ENCODE measurements at regions of chr3 and their contacts with region 1.

Region 1: DNA sequence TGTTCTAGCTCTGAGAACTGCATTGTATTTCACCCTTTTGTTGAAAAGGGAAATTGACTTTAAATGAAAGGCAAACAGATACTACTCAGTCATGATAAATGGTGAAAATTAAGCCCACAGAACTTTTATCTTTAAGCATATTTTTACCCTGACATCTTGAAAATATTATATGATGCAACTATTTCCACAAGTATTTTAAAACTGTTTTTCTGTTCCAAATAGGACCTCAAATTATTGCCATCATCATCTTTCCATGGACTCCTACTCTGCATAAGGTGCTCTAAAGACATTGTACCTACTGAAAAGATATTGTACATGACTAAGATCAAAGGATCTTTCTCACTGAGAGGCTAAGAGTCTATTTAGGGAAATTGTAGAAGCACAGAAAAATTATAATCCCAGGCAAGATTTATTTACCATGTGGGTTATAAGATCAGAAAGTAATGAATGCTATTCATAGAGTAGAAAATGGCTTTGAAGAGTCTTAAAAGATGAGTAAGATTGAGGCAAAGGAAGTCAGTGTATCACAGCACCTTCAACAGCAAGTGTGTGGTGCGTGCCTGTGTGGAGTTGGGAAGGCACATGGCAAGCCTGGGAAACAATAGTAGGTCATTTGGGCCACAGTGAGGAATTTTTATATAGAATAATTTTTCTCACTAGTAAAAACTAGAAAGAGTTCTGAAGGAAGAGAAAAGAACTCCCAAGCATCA is 68.8 kb downstream of the VGLL3 start:
- DNase-seq: no peak
- H3K4me3 ChIP-seq: no peak overlapping the region
- H3K27ac ChIP-seq: no peak overlapping the region
- H3K4me1 ChIP-seq: no peaks in the 10 kb centered on the region
- H3K27me3 ChIP-seq: no peaks in the 10 kb centered on the region
- CTCF ChIP-seq: no peak
- POLR2A ChIP-seq: no peak

Region 2: GRCh38 chr3:86880066-86880465 is 42.1 kb before region 1 on chr3:
- intact Hi-C with region 1: loop called (anchors 2 kb)
- DNase-seq: no peak
- H3K4me3 ChIP-seq: no peak overlapping the region
- H3K27ac ChIP-seq: no peak overlapping the region
- H3K4me1 ChIP-seq: no peaks in the 10 kb centered on the region
- H3K27me3 ChIP-seq: no peaks in the 10 kb centered on the region
- CTCF ChIP-seq: no peak
- POLR2A ChIP-seq: no peak

Measured in breast epithelium (tissue), 4 donors.